ENCODE measurements at regions of chr4 and their contacts with region 1.

Region 1: GRCh38 chr4:15215109-15215508 is 212.7 kb upstream of the C1QTNF7 start:
- DNase-seq: no peak
- H3K4me3 Mint-ChIP-seq: no peak overlapping the region
- H3K27ac Mint-ChIP-seq: no peak overlapping the region
- H3K4me1 Mint-ChIP-seq: no peaks in the 10 kb centered on the region
- H3K27me3 Mint-ChIP-seq: peaks cover 17% of the 10 kb centered on the region

Region 2: GRCh38 chr4:14431155-14432134 is 783.7 kb before region 1 on chr4:
- CTCF ChIA-PET with region 1: no interaction called
- POLR2A ChIA-PET with region 1: interaction called, 10 read pairs
- DNase-seq: no peak
- H3K4me3 Mint-ChIP-seq: no peak overlapping the region
- H3K27ac Mint-ChIP-seq: no peak overlapping the region
- H3K4me1 Mint-ChIP-seq: peaks cover 5% of the 10 kb centered on the region
- H3K27me3 Mint-ChIP-seq: no peaks in the 10 kb centered on the region

Region 3: DNA sequence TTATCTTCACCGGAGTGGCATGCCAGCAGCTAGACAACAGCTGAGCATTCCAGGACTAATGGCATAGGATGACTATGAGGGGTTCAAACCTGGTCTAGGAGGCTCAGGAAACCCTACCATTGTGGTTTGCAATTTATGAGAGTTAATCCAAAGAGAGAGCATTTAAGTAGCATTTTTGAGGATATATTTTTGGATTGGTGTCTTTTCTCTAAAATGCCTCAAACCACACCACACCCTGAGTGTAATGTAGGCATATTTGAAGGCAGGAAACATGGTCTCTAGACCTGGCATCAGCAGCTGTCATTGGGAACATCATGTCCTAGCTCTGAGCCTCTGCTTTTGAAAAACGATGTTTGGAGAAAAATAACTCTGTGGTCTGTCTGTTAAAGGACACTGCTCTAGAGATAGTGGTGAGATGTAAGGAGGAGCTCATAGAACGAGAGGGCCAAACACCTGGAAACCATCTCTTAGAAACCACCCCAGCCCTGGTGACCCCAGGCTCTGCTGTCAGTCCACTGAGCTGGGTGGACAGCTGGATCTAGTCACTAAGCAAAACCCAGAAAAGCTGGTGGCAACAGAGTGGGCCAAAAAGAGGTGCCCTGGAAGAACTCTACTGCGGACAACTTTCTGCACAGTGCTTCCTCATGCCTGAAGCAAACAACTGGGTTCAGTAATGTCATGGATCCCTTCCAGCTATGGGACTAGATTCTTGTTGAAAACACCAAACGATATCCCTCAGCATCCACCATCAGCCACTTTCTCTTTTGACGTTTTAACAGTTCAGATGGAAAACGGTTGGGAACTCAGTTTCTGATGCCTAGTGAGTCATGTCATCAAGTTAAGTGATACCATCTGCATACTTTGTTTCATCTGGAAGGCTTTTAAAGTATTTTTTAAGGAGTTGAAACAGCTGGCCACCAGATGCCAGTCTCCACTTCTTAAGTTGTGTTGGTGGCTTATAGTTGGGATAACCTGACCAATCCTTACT is 112.5 kb after region 1 on chr4:
- CTCF ChIA-PET with region 1: no interaction called
- POLR2A ChIA-PET with region 1: no interaction called
- DNase-seq: no peak
- H3K4me3 Mint-ChIP-seq: no peak overlapping the region
- H3K27ac Mint-ChIP-seq: no peak overlapping the region
- H3K4me1 Mint-ChIP-seq: no peaks in the 10 kb centered on the region
- H3K27me3 Mint-ChIP-seq: peaks cover 2% of the 10 kb centered on the region